Heart right ventricle (tissue), 16 donors: ENCODE measurements at regions of chr17 and their contacts with region 1.

Region 1: GRCh38 chr17:61412143-61412859 is 12.7 kb downstream of the TBX2 start:
- DNase-seq: peak; percentile 79 to 89
- ATAC-seq: peak; percentile 72 to 88 (median 76)
- H3K4me3 ChIP-seq: peak overlapping the region; percentile 2 to 81 (median 63)
- H3K27ac ChIP-seq: peak overlapping the region; percentile 41 to 90 (median 84)
- H3K4me1 ChIP-seq: peaks cover 8 to 82% (median 62%) of the 10 kb centered on the region in 9 donors
- H3K27me3 ChIP-seq: peaks cover 0 to 64% (median 24%) of the 10 kb centered on the region in 7 donors
- CTCF ChIP-seq: peak; percentile 97 to 100 (median 99)

Region 2: DNA sequence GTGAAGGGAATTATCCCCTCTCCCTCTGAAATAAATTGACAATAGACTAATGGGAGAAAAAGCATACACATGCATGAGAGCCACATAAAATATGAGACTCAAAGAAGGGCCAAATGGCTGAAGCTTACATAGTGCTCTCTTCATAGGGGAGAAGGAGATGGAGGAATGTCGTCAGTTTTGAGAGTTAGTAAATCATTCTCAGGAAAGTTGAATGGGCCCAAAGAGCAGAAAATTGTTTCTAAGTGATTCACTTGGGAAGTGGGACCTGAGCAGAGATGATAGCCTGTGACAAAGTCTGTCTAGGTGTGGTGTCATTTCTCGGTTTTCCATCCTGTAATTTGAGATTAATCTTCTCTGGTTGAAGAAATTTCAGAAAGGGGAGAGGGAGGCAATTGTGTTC is 699.6 kb before region 1 on chr17:
- intact Hi-C with region 1: loop called in 2 of 10 experiments (anchors 10 kb)
- DNase-seq: no peak
- ATAC-seq: no peak
- H3K4me3 ChIP-seq: no peak overlapping the region
- H3K27ac ChIP-seq: no peak overlapping the region
- H3K4me1 ChIP-seq: no peaks in the 10 kb centered on the region
- H3K27me3 ChIP-seq: no peaks in the 10 kb centered on the region
- CTCF ChIP-seq: no peak

Region 3: GRCh38 chr17:61002316-61002736 is 410.0 kb before region 1 on chr17:
- intact Hi-C with region 1: loop called in 2 of 10 experiments (anchors 5 kb)
- DNase-seq: no peak
- ATAC-seq: peak in 2 of 8 donors; percentile 52 to 59
- H3K4me3 ChIP-seq: no peak overlapping the region
- H3K27ac ChIP-seq: peak overlapping the region in 1 of 10 donors; percentile 18
- H3K4me1 ChIP-seq: peaks cover 0 to 11% (median under 1%) of the 10 kb centered on the region in 9 donors
- H3K27me3 ChIP-seq: no peaks in the 10 kb centered on the region
- CTCF ChIP-seq: peak; percentile 28 to 73 (median 61)

Region 4: GRCh38 chr17:61551255-61551742 is 139.0 kb after region 1 on chr17:
- intact Hi-C with region 1: loop called in 9 of 10 experiments (anchors 2 to 5 kb)
- DNase-seq: no peak
- ATAC-seq: no peak
- H3K4me3 ChIP-seq: no peak overlapping the region
- H3K27ac ChIP-seq: no peak overlapping the region
- H3K4me1 ChIP-seq: no peaks in the 10 kb centered on the region
- H3K27me3 ChIP-seq: peaks cover 0 to 55% (median 41%) of the 10 kb centered on the region in 7 donors
- CTCF ChIP-seq: peak; percentile 21 to 73 (median 63)

Region 5: GRCh38 chr17:62065598-62066468 is 653.5 kb after region 1 on chr17:
- intact Hi-C with region 1: loop called in 4 of 10 experiments (anchors 2 to 10 kb)
- DNase-seq: peak; percentile 99
- ATAC-seq: peak; percentile 99 to 100 (median 100)
- H3K4me3 ChIP-seq: peak overlapping the region; percentile 63 to 99 (median 94)
- H3K27ac ChIP-seq: peak overlapping the region; percentile 92 to 100 (median 99)
- H3K4me1 ChIP-seq: peaks cover 0 to 38% (median 29%) of the 10 kb centered on the region in 9 donors
- H3K27me3 ChIP-seq: no peaks in the 10 kb centered on the region
- CTCF ChIP-seq: peak; percentile 88 to 98 (median 93)